Naive thymus-derived CD4-positive, alpha-beta T cell (primary cell): ENCODE measurements at regions of chr3 and their contacts with region 1.

Region 1: GRCh38 chr3:30693470-30694120 is 87.2 kb downstream of the TGFBR2 start:
- DNase-seq: peak in 7 of 9 donors; percentile 63 to 79 (median 72)
- ATAC-seq: peak; percentile 94
- H3K4me3 ChIP-seq: no peak overlapping the region
- H3K4me3 Mint-ChIP-seq: peak overlapping the region in 3 of 10 donors; percentile 15 to 49 (median 37)
- H3K27ac ChIP-seq: no peak overlapping the region
- H3K27ac Mint-ChIP-seq: peak overlapping the region in 8 of 9 donors; percentile 33 to 98 (median 86)
- H3K4me1 ChIP-seq: peaks cover 11 to 30% of the 10 kb centered on the region in 2 donors
- H3K4me1 Mint-ChIP-seq: peaks cover 25 to 94% (median 85%) of the 10 kb centered on the region in 7 donors
- H3K27me3 ChIP-seq: no peaks in the 10 kb centered on the region
- H3K27me3 Mint-ChIP-seq: no peaks in the 10 kb centered on the region

Region 2: DNA sequence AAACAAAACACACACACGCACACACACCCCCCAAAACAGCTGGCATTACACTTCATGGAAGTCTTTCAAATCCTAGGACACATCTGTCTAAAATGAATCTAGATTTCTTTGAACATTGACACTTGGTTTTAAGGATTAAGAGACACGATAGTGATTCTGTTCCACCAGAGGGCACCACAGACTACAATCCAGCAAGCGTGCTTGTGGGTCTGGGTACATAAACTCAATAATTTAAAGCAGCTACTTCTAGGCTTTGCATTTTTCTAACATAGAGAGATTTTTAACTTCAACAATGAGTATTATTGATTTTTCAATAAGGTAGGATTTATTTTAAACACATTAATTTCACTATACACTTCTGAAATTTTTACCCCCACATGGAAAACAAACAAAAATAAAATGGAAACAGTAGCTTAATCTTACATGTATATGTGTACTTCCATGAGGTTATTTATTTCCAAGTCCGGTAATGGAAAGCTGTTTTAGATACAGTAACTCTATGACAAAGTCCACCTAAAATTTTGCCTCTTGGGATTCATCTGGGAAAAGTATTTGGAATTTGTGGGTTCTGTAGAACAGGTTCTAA is 651.2 kb before region 1 on chr3:
- CTCF ChIA-PET with region 1: interaction called, 16 read pairs
- POLR2A ChIA-PET with region 1: interaction called, 3 read pairs
- intact Hi-C with region 1: loop called in 1 of 2 experiments (anchors 1 kb)
- DNase-seq: peak in 8 of 9 donors; percentile 25 to 73 (median 63)
- ATAC-seq: peak; percentile 68
- H3K4me3 ChIP-seq: no peak overlapping the region
- H3K4me3 Mint-ChIP-seq: no peak overlapping the region
- H3K27ac ChIP-seq: no peak overlapping the region
- H3K27ac Mint-ChIP-seq: no peak overlapping the region
- H3K4me1 ChIP-seq: no peaks in the 10 kb centered on the region
- H3K4me1 Mint-ChIP-seq: peaks cover 0 to 7% (median 4%) of the 10 kb centered on the region in 7 donors
- H3K27me3 ChIP-seq: no peaks in the 10 kb centered on the region
- H3K27me3 Mint-ChIP-seq: peaks cover 17 to 34% (median 28%) of the 10 kb centered on the region in 5 donors

Region 3: DNA sequence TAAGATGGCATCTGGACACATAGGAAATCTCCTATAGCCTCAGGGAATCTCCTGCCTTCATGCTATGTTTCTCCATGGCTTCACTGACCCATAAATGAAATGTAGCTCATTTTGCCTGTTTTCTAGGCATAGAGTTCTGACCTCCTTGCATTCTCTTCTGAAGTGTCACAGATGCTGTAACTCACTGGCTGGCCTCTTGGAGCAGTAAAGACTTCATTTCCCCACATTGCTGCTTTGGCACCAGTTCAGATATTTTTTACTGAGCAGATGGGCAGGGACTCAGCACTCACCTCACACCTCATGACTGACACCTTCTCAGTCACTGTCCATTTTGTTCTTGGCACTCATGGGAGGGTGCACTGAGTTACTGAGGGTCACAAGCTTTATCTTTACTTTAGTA is 373.9 kb before region 1 on chr3:
- CTCF ChIA-PET with region 1: interaction called, 13 read pairs
- POLR2A ChIA-PET with region 1: interaction called, 5 read pairs
- intact Hi-C with region 1: loop called (anchors 1 to 2 kb)
- DNase-seq: peak in 7 of 9 donors; percentile 32 to 72 (median 63)
- ATAC-seq: peak; percentile 90
- H3K4me3 ChIP-seq: no peak overlapping the region
- H3K4me3 Mint-ChIP-seq: peak overlapping the region in 4 of 10 donors; percentile 0 to 7 (median 4)
- H3K27ac ChIP-seq: no peak overlapping the region
- H3K27ac Mint-ChIP-seq: peak overlapping the region in 6 of 9 donors; percentile 1 to 60 (median 43)
- H3K4me1 ChIP-seq: peaks cover 0 to 15% of the 10 kb centered on the region in 2 donors
- H3K4me1 Mint-ChIP-seq: peaks cover 3 to 36% (median 20%) of the 10 kb centered on the region in 7 donors
- H3K27me3 ChIP-seq: no peaks in the 10 kb centered on the region
- H3K27me3 Mint-ChIP-seq: no peaks in the 10 kb centered on the region

Region 4: GRCh38 chr3:30475038-30475808 is 218.4 kb before region 1 on chr3:
- CTCF ChIA-PET with region 1: no interaction called
- POLR2A ChIA-PET with region 1: interaction called, 3 read pairs
- intact Hi-C with region 1: loop called in 1 of 2 experiments (anchors 10 kb)
- DNase-seq: peak in 6 of 9 donors; percentile 20 to 41 (median 32)
- ATAC-seq: peak; percentile 69
- H3K4me3 ChIP-seq: no peak overlapping the region
- H3K4me3 Mint-ChIP-seq: peak overlapping the region in 6 of 10 donors; percentile 8 to 63 (median 34)
- H3K27ac ChIP-seq: no peak overlapping the region
- H3K27ac Mint-ChIP-seq: peak overlapping the region in 8 of 9 donors; percentile 6 to 65 (median 24)
- H3K4me1 ChIP-seq: peaks cover 0 to 27% of the 10 kb centered on the region in 2 donors
- H3K4me1 Mint-ChIP-seq: peaks cover 24 to 74% (median 53%) of the 10 kb centered on the region in 7 donors
- H3K27me3 ChIP-seq: no peaks in the 10 kb centered on the region
- H3K27me3 Mint-ChIP-seq: no peaks in the 10 kb centered on the region

Region 5: GRCh38 chr3:30553641-30554316 is 139.8 kb before region 1 on chr3:
- CTCF ChIA-PET with region 1: no interaction called
- POLR2A ChIA-PET with region 1: no interaction called
- intact Hi-C with region 1: no loop called
- DNase-seq: no peak
- ATAC-seq: no peak
- H3K4me3 ChIP-seq: no peak overlapping the region
- H3K4me3 Mint-ChIP-seq: no peak overlapping the region
- H3K27ac ChIP-seq: no peak overlapping the region
- H3K27ac Mint-ChIP-seq: no peak overlapping the region
- H3K4me1 ChIP-seq: no peaks in the 10 kb centered on the region
- H3K4me1 Mint-ChIP-seq: peaks cover 0 to 17% (median 11%) of the 10 kb centered on the region in 7 donors
- H3K27me3 ChIP-seq: no peaks in the 10 kb centered on the region
- H3K27me3 Mint-ChIP-seq: no peaks in the 10 kb centered on the region

Region 6: GRCh38 chr3:30611613-30612436 is 81.8 kb before region 1 on chr3:
- CTCF ChIA-PET with region 1: interaction called, 20 read pairs
- POLR2A ChIA-PET with region 1: interaction called, 9 read pairs
- intact Hi-C with region 1: loop called (anchors 1 to 2 kb)
- DNase-seq: no peak
- ATAC-seq: peak; percentile 49
- H3K4me3 ChIP-seq: peak overlapping the region; percentile 92
- H3K4me3 Mint-ChIP-seq: peak overlapping the region; percentile 88 to 100 (median 95)
- H3K27ac ChIP-seq: peak overlapping the region; percentile 79
- H3K27ac Mint-ChIP-seq: peak overlapping the region; percentile 87 to 99 (median 95)
- H3K4me1 ChIP-seq: peaks cover 30 to 65% of the 10 kb centered on the region in 2 donors
- H3K4me1 Mint-ChIP-seq: peaks cover 60 to 75% (median 63%) of the 10 kb centered on the region in 7 donors
- H3K27me3 ChIP-seq: no peaks in the 10 kb centered on the region
- H3K27me3 Mint-ChIP-seq: no peaks in the 10 kb centered on the region

Region 7: GRCh38 chr3:30672959-30673358 is 20.6 kb before region 1 on chr3:
- CTCF ChIA-PET with region 1: interaction called, 12 read pairs
- POLR2A ChIA-PET with region 1: interaction called, 11 read pairs
- intact Hi-C with region 1: loop called (anchors 2 kb)
- DNase-seq: no peak
- ATAC-seq: no peak
- H3K4me3 ChIP-seq: peak overlapping the region; percentile 15
- H3K4me3 Mint-ChIP-seq: peak overlapping the region; percentile 69 to 93 (median 80)
- H3K27ac ChIP-seq: peak overlapping the region; percentile 59
- H3K27ac Mint-ChIP-seq: peak overlapping the region; percentile 74 to 99 (median 95)
- H3K4me1 ChIP-seq: peaks cover 19 to 85% of the 10 kb centered on the region in 2 donors
- H3K4me1 Mint-ChIP-seq: peaks cover 74 to 100% (median 99%) of the 10 kb centered on the region in 7 donors
- H3K27me3 ChIP-seq: no peaks in the 10 kb centered on the region
- H3K27me3 Mint-ChIP-seq: no peaks in the 10 kb centered on the region

Region 8: DNA sequence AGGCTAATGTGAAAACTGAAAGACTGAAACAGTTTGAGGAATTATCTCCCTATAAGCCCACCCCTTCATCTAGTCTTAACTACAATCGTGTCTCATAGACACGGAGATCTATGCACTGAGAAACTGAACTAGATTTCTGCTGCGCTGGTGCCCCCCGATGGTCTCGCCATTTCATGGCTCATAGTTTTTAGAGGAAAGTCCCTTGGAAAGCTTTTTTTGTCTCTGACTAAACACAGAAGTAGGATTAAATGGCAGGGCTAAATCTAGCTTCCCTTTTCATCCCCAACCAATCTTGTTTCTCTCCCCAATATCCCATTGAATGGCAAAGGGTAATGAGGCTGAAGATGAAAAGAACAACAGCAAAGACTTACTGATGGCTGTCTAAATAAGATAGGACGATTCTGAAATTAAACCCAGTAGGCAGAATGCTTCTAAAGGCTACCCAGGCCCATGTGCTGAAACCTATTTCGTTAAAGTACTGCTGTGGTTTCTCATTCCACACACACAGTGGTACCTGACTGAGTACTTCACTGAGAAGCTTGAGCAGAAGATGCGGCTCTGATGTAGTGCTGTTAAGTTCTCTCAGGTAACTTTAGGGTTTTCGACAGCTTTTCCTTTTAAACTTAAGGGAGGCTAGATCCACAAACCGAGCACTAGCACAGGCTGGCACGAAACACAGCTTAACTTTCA is 58.2 kb after region 1 on chr3:
- CTCF ChIA-PET with region 1: interaction called, 3 read pairs
- POLR2A ChIA-PET with region 1: no interaction called
- intact Hi-C with region 1: loop called in 1 of 2 experiments (anchors 1 kb)
- DNase-seq: peak; percentile 8 to 71 (median 54)
- ATAC-seq: peak; percentile 65
- H3K4me3 ChIP-seq: no peak overlapping the region
- H3K4me3 Mint-ChIP-seq: peak overlapping the region in 3 of 10 donors; percentile 16 to 48 (median 45)
- H3K27ac ChIP-seq: no peak overlapping the region
- H3K27ac Mint-ChIP-seq: peak overlapping the region in 1 of 9 donors; percentile 28
- H3K4me1 ChIP-seq: peaks cover 0 to 3% of the 10 kb centered on the region in 2 donors
- H3K4me1 Mint-ChIP-seq: peaks cover 0 to 33% (median 12%) of the 10 kb centered on the region in 7 donors
- H3K27me3 ChIP-seq: no peaks in the 10 kb centered on the region
- H3K27me3 Mint-ChIP-seq: peaks cover 0 to 9% (median 0%) of the 10 kb centered on the region in 5 donors